CD4-positive, alpha-beta memory T cell (primary cell): ENCODE measurements at regions of chr2 and their contacts with region 1.

Region 1: DNA sequence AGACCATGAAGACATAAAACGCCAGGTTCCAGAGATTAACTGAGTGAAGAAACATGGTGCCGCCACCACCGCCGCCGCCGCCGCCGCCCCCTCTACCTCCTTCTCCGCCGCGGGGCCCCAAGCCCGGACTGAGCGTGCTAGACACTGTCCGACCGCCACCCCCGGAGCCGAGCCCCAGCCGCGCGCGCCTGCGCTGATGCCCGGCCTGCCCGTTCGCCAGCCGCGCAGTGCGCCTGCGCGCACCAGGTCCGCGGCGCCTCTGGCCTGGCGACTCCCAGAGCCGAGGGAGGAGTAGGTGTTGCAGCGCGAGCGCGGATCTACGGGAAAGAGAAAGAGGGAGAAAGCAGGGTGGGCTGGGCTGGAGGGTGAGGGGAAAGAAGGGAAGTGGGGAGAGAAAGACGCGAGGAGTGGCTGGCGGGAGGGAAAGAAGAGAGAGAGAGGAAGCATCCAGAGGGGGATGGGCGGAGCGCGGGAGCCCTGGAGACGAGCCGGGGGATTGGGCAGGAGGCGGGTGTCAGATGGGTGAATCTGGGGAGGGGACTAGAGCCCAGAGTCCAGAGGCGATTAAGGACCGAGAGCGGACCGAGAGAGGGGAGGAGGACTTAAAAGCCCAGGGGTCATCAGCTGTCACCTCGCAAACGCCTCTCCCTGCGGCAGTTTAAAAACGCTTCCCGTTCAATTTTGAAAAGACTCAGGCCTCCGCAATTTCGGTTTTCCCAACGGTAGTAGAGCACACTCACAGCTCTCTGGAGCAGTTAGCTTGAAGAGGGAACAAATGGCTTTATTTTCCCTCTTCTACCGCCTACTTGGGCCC is at the start of gene PGAP1:
- DNase-seq: peak; percentile 79 to 84 (median 82)
- H3K4me3 ChIP-seq: peak within 1 kb of the TSS; percentile 78 to 86
- H3K4me3 Mint-ChIP-seq: peak within 1 kb of the TSS; percentile 92 to 98 (median 96)
- H3K27ac ChIP-seq: peak within 1 kb of the TSS; percentile 71
- H3K27ac Mint-ChIP-seq: peak within 1 kb of the TSS; percentile 93 to 98 (median 95)
- H3K4me1 ChIP-seq: peaks cover 30% of the 10 kb centered on the region
- H3K4me1 Mint-ChIP-seq: peaks cover 23 to 32% (median 27%) of the 10 kb centered on the region in 4 donors
- H3K27me3 ChIP-seq: no peaks in the 10 kb centered on the region
- H3K27me3 Mint-ChIP-seq: no peaks in the 10 kb centered on the region
- total RNA-seq, gene PGAP1: 7.4 to 9.1 TPM

Region 2: GRCh38 chr2:196798980-196799379 is 127.8 kb before region 1 on chr2:
- CTCF ChIA-PET with region 1: interaction called, 3 read pairs
- POLR2A ChIA-PET with region 1: interaction called, 11 read pairs
- intact Hi-C with region 1: loop called (anchors 5 kb)
- DNase-seq: peak in 1 of 5 donors; percentile 1
- H3K4me3 ChIP-seq: peak overlapping the region; percentile 83 to 88
- H3K4me3 Mint-ChIP-seq: peak overlapping the region; percentile 95 to 100 (median 98)
- H3K27ac ChIP-seq: peak overlapping the region; percentile 58
- H3K27ac Mint-ChIP-seq: peak overlapping the region; percentile 77 to 99 (median 96)
- H3K4me1 ChIP-seq: peaks cover 14% of the 10 kb centered on the region
- H3K4me1 Mint-ChIP-seq: peaks cover 19 to 41% (median 28%) of the 10 kb centered on the region in 4 donors
- H3K27me3 ChIP-seq: no peaks in the 10 kb centered on the region
- H3K27me3 Mint-ChIP-seq: peaks cover 0 to 3% of the 10 kb centered on the region in 2 donors

Region 3: GRCh38 chr2:196914867-196915460 is 11.8 kb before region 1 on chr2:
- CTCF ChIA-PET with region 1: interaction called, 4 read pairs
- POLR2A ChIA-PET with region 1: interaction called, 26 read pairs
- intact Hi-C with region 1: loop called (anchors 1 kb)
- DNase-seq: peak; percentile 44 to 62 (median 45)
- H3K4me3 ChIP-seq: no peak overlapping the region
- H3K4me3 Mint-ChIP-seq: peak overlapping the region; percentile 36 to 82 (median 66)
- H3K27ac ChIP-seq: peak overlapping the region; percentile 10
- H3K27ac Mint-ChIP-seq: peak overlapping the region; percentile 67 to 92 (median 90)
- H3K4me1 ChIP-seq: peaks cover 22% of the 10 kb centered on the region
- H3K4me1 Mint-ChIP-seq: peaks cover 15 to 33% (median 20%) of the 10 kb centered on the region in 4 donors
- H3K27me3 ChIP-seq: no peaks in the 10 kb centered on the region
- H3K27me3 Mint-ChIP-seq: no peaks in the 10 kb centered on the region

Region 4: DNA sequence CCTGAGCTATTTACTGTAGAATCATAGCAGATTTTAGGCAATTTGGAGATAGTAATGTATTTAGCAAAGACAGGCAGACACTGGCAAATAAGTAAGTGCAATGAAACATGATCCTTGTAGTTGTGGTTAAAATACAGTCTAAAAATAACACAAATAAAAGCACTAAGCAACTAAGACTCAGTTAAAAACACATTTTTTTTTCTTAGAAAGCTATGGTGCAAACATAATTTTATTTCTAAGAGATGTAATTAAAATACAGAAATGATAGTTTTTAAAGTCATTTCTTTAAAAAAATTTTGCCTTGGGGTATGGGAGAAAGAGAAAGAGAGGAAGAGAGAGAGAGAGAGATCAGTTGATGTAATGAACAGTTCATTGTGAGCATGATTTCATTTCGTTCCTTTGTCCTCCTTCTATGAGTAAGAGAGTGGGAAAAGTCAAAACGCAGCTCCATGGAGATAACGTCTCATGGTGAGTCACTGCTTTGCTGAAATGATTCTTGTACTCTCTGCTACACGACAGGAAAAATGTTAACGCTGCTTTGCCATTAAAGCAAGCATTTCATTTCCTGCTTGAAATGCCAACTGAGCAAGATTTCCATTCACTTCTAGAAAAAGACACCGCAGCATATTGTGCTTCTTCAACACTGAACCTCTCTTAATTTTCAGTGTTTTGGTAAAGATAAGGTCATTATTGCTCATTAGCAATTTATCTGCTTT is 61.0 kb after region 1 on chr2:
- CTCF ChIA-PET with region 1: no interaction called
- POLR2A ChIA-PET with region 1: no interaction called
- intact Hi-C with region 1: loop called (anchors 5 kb)
- DNase-seq: no peak
- H3K4me3 ChIP-seq: no peak overlapping the region
- H3K4me3 Mint-ChIP-seq: no peak overlapping the region
- H3K27ac ChIP-seq: no peak overlapping the region
- H3K27ac Mint-ChIP-seq: peak overlapping the region; percentile 13 to 85 (median 76)
- H3K4me1 ChIP-seq: peaks cover 20% of the 10 kb centered on the region
- H3K4me1 Mint-ChIP-seq: peaks cover 27 to 43% (median 31%) of the 10 kb centered on the region in 4 donors
- H3K27me3 ChIP-seq: no peaks in the 10 kb centered on the region
- H3K27me3 Mint-ChIP-seq: no peaks in the 10 kb centered on the region

Region 5: DNA sequence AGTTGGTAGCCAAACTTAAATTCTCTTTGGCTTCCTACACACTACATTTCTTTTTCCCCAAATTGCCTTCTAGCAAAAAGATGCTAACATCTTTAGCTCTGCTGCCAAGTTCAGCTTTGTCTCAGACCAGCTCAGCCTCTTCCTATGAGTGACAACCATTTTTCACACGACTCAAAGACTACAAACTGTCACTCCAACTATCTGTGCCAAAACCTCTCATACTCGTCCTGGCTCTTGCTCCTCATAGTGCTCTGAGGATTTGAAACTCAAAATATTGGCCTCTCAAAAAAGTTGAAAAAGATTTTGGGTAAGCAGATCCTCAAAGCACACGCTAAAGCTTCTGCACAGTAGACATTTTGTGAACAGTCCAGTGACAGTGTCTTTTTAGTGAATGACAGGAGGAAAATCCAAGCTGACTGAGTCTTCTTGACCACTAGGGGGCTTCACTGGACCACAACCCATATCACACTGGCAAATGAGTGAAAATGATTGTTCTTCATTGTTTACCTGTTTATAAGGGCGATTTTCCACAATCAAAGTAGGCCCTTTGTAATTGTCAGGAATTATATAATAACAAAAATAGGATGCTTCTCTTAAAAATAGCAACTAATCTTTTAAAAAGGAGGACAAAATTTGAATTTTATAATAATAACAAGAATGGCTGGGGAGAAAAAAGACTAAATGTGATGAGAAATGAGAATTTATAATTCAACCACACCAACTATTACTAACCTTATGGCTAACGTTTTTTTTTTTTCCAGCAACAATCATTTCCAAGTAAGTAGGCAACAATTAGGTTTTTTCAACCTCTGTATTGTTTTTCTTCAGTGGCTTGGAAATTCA is 85.3 kb after region 1 on chr2:
- CTCF ChIA-PET with region 1: no interaction called
- POLR2A ChIA-PET with region 1: no interaction called
- intact Hi-C with region 1: no loop called
- DNase-seq: peak in 4 of 5 donors; percentile 28 to 43 (median 37)
- H3K4me3 ChIP-seq: no peak overlapping the region
- H3K4me3 Mint-ChIP-seq: no peak overlapping the region
- H3K27ac ChIP-seq: no peak overlapping the region
- H3K27ac Mint-ChIP-seq: peak overlapping the region; percentile 50 to 80 (median 68)
- H3K4me1 ChIP-seq: no peaks in the 10 kb centered on the region
- H3K4me1 Mint-ChIP-seq: peaks cover 3 to 10% (median 9%) of the 10 kb centered on the region in 4 donors
- H3K27me3 ChIP-seq: no peaks in the 10 kb centered on the region
- H3K27me3 Mint-ChIP-seq: no peaks in the 10 kb centered on the region